Prostate gland (tissue), 2 donors: ENCODE measurements at regions of chr11 and their contacts with region 1.

Region 1: DNA sequence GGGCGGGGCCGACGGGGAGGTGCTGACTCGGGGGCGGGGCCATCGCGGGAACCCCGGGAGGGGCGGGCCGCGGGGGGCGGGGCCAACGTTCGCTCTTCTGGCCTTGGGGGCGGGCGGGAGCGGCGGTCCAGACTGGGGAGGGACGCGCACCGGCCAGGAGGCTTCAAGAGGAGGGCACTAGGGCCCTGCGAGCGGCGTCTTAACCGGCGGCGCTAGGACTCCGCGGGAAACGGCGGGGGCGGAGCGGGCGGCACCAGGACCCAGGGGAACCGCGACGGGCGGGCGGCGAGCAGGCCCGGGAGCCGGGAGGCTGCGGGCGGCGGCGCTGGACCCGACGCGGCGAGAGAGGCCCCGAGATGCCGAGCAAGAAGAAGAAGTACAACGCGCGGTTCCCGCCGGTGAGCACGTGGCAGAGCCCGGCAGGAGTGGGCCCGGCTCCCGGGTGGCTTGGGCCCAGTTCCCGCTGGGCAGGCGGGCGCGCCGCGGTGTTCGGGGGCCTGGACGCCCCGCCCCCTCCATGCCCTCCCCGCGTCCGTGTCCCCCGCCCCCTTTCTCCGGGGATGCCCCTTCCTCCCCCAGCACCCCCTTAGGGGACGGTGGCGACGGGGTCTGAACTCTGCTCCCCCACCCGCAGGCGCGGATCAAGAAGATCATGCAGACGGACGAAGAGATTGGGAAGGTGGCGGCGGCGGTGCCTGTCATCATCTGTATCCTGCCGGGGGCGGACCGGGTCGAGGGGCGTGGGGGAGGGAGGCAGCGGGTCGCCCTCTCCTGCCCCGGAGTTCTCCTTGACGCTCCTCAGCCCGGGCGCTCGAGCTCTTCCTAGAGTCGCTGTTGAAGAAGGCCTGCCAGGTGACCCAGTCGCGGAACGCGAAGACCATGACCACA is at the start of gene DRAP1:
- DNase-seq: peak; percentile 99
- H3K4me3 ChIP-seq: peak within 1 kb of the TSS; percentile 92 to 98
- H3K27ac ChIP-seq: peak within 1 kb of the TSS; percentile 89 to 92
- H3K4me1 ChIP-seq: peaks cover 27% of the 10 kb centered on the region
- H3K27me3 ChIP-seq: no peaks in the 10 kb centered on the region
- CTCF ChIP-seq: peak in 3 of 4 experiments; percentile 12 to 27 (median 12)
- POLR2A ChIP-seq: peak; percentile 71
- total RNA-seq, gene DRAP1: 101 to 127 TPM

Region 2: GRCh38 chr11:65530157-65530496 is 389.3 kb before region 1 on chr11:
- intact Hi-C with region 1: no loop called
- DNase-seq: no peak
- H3K4me3 ChIP-seq: no peak overlapping the region
- H3K27ac ChIP-seq: no peak overlapping the region
- H3K4me1 ChIP-seq: peaks cover 6% of the 10 kb centered on the region
- H3K27me3 ChIP-seq: no peaks in the 10 kb centered on the region
- CTCF ChIP-seq: no peak
- POLR2A ChIP-seq: no peak

Region 3: GRCh38 chr11:65859200-65859811 is 60.1 kb before region 1 on chr11:
- intact Hi-C with region 1: loop called (anchors 1 kb)
- DNase-seq: peak; percentile 99
- H3K4me3 ChIP-seq: peak overlapping the region; percentile 99
- H3K27ac ChIP-seq: peak overlapping the region; percentile 94 to 96
- H3K4me1 ChIP-seq: peaks cover 12% of the 10 kb centered on the region
- H3K27me3 ChIP-seq: no peaks in the 10 kb centered on the region
- CTCF ChIP-seq: peak in 1 of 4 experiments; percentile 32
- POLR2A ChIP-seq: peak; percentile 87

Region 4: GRCh38 chr11:65888163-65888814 is 31.1 kb before region 1 on chr11 and contains the start of gene FIBP:
- intact Hi-C with region 1: loop called (anchors 1 kb)
- DNase-seq: peak; percentile 97
- H3K4me3 ChIP-seq: peak within 1 kb of the TSS; percentile 54 to 58
- H3K27ac ChIP-seq: peak within 1 kb of the TSS; percentile 89 to 93
- H3K4me1 ChIP-seq: peaks cover 17% of the 10 kb centered on the region
- H3K27me3 ChIP-seq: no peaks in the 10 kb centered on the region
- CTCF ChIP-seq: peak; percentile 83 to 99 (median 96)
- POLR2A ChIP-seq: peak; percentile 80
- total RNA-seq, gene FIBP: 87.7 to 151 TPM

Region 5: DNA sequence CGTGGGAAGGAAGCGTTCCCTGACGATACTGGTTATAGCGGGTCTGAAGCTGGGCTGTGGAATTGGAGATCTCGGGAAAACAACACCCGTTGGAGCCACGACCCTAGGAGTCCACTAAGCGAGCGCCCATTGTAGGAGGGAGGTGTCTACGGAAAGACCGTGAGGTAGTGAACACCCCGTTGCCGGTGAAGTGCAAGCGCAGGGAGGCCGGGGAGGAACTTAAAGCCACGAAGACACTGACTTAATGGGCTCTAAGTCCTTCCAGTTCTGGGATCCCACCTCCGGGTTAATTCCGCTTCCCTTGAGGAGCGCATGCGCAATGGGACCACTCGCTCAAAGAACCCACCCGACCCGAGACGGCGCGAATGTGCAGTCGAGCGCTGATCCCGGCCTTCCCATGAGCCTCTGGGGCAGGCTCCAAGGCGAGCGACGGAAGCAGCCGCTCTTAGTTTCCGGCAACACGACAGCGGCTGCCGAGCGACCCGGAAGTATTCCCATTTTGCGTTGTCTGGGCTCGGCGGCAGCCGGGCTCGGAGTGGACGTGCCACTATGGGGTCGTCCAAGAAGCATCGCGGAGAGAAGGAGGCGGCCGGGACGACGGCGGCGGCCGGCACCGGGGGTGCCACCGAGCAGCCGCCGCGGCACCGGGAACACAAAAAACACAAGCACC is 42.0 kb after region 1 on chr11 and contains the start of gene SART1:
- intact Hi-C with region 1: loop called (anchors 5 kb)
- DNase-seq: peak; percentile 96
- H3K4me3 ChIP-seq: peak within 1 kb of the TSS; percentile 89 to 100
- H3K27ac ChIP-seq: peak within 1 kb of the TSS; percentile 74 to 81
- H3K4me1 ChIP-seq: peaks cover 12% of the 10 kb centered on the region
- H3K27me3 ChIP-seq: no peaks in the 10 kb centered on the region
- CTCF ChIP-seq: peak in 2 of 4 experiments; percentile 26 to 31
- POLR2A ChIP-seq: peak; percentile 48
- total RNA-seq, gene SART1: 36.7 to 76.6 TPM

Region 6: DNA sequence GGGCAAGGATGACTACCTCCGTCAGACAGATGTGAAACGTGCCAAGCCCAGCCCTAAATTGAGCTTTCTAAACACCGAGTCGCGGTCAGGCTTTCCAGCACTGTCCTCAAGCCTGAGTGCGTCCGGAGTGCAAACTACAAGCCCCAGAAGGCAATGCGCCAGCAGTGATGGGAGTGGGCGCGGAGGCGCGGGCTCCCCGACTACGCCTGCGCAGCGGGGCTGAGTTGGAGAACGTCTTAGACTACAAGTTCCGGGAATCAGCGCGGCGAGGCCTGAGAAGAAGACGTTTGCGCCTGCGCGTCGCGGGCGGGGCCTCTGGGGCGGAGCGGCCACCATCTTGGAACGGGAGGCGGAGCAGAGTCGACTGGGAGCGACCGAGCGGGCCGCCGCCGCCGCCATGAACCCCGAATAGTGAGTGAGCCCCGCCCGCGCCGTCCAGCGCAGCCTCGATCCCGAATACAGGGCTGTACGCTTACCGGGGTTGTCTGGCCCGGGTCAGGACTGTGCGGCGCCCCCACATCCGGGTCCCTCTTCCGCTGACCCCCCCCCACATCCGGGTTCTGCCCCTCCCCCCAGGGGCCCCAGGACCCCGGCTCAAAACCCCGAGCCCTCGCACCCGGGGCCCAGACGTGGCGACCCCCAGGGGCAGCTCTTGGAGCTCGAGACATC is 349.0 kb after region 1 on chr11 and contains the start of gene RAB1B:
- intact Hi-C with region 1: loop called (anchors 10 kb)
- DNase-seq: peak; percentile 100
- H3K4me3 ChIP-seq: peak within 1 kb of the TSS; percentile 89 to 92
- H3K27ac ChIP-seq: peak within 1 kb of the TSS; percentile 98
- H3K4me1 ChIP-seq: peaks cover 9% of the 10 kb centered on the region
- H3K27me3 ChIP-seq: no peaks in the 10 kb centered on the region
- CTCF ChIP-seq: peak in 1 of 4 experiments; percentile 15
- POLR2A ChIP-seq: peak; percentile 80
- total RNA-seq, gene RAB1B: 140 to 166 TPM

Region 7: DNA sequence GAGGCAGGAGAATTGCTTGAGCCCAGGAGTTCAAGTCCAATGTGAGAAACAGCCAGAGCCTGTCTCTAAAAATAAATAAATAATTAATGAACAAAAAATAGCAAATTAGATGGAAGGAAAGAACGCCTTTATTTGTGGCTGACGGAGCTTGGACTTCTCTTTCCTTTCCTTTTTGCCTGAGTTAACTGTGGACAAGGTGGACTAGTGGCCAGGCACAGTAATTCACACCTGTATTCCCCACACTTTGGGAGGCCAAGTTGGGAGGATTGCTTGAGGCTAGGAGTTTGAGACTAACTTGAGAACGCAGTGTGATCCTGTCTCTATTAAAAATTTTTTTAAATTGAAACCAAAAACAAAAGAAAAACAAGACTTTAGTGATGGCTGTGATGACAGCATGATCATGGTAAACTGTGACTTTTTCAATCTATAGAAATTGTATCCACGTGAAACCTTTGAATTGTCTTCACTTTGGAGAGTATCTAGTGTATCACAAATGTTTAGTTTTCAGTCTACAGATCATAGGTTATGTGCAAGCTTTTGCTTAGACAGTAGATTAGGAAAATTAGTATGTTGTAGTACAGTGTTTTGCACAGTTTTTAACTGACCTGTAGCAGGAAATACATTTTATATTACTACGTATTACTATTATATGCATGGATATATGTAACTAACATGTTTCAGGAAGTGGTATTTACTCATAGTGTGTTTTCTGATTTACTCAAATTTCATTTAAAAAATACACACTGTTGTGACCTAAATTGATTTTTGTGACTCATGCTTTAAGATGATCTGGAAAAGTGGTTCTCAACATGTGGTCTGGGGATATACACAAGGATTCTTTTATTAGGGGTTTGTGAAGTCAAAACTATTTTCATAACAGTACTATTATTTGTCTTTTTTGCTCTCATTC is 1241.7 kb after region 1 on chr11:
- intact Hi-C with region 1: no loop called
- DNase-seq: no peak
- H3K4me3 ChIP-seq: no peak overlapping the region
- H3K27ac ChIP-seq: no peak overlapping the region
- H3K4me1 ChIP-seq: no peaks in the 10 kb centered on the region
- H3K27me3 ChIP-seq: no peaks in the 10 kb centered on the region
- CTCF ChIP-seq: no peak
- POLR2A ChIP-seq: no peak